H1 (cell line): ENCODE measurements at regions of chr9 and their contacts with region 1.

Region 1: GRCh38 chr9:18442629-18443491 is 31.1 kb upstream of the ADAMTSL1 start:
- DNase-seq: peak; percentile 47 to 70
- H3K4me3 ChIP-seq: no peak overlapping the region
- H3K27ac ChIP-seq: no peak overlapping the region
- H3K4me1 ChIP-seq: peaks cover 0 to 7% (median 3%) of the 10 kb centered on the region in 4 experiments; a peak in 5 of 7 replicates
- H3K27me3 ChIP-seq: peaks cover 0 to 2% (median 0%) of the 10 kb centered on the region in 4 experiments; a peak in 1 of 7 replicates
- CTCF ChIP-seq: peak; percentile 89 to 97 (median 90)
- EP300 ChIP-seq: no peak
- POLR2A ChIP-seq: no peak
- RAD21 ChIP-seq: peak; percentile 77

Region 2: GRCh38 chr9:18255158-18255629 is 187.7 kb before region 1 on chr9:
- CTCF ChIA-PET with region 1: interaction called, 39 read pairs
- POLR2A ChIA-PET with region 1: interaction called, 4 read pairs
- DNase-seq: peak; percentile 31 to 87
- H3K4me3 ChIP-seq: no peak overlapping the region
- H3K27ac ChIP-seq: no peak overlapping the region
- H3K4me1 ChIP-seq: no peaks in the 10 kb centered on the region
- H3K27me3 ChIP-seq: no peaks in the 10 kb centered on the region
- CTCF ChIP-seq: peak; percentile 68 to 90 (median 78)
- EP300 ChIP-seq: no peak
- POLR2A ChIP-seq: no peak
- RAD21 ChIP-seq: peak; percentile 90 to 96

Region 3: GRCh38 chr9:18260521-18260920 is 182.3 kb before region 1 on chr9:
- CTCF ChIA-PET with region 1: interaction called, 39 read pairs
- POLR2A ChIA-PET with region 1: interaction called, 4 read pairs
- DNase-seq: no peak
- H3K4me3 ChIP-seq: no peak overlapping the region
- H3K27ac ChIP-seq: no peak overlapping the region
- H3K4me1 ChIP-seq: no peaks in the 10 kb centered on the region
- H3K27me3 ChIP-seq: no peaks in the 10 kb centered on the region
- CTCF ChIP-seq: no peak
- EP300 ChIP-seq: no peak
- POLR2A ChIP-seq: no peak
- RAD21 ChIP-seq: no peak

Region 4: DNA sequence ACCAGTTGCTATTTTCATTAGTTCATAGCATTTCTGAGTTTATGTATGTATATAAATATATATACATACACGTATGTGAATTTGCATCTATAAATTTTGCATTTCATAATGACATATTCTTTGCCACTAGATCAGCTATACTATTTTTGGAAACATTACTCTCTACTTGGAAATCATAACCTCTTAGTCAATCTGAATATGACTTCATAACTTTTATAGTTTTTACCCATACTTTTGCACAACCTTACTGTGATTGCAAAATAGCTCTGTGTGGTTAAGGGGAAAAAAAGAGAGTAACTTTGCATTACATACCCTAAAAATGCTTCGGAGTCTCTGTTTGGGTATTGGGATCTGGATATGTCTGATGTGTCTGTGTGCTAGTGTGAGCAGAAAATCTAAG is 13.8 kb before region 1 on chr9:
- CTCF ChIA-PET with region 1: interaction called, 23 read pairs
- POLR2A ChIA-PET with region 1: no interaction called
- DNase-seq: no peak
- H3K4me3 ChIP-seq: no peak overlapping the region
- H3K27ac ChIP-seq: no peak overlapping the region
- H3K4me1 ChIP-seq: no peaks in the 10 kb centered on the region
- H3K27me3 ChIP-seq: no peaks in the 10 kb centered on the region
- CTCF ChIP-seq: no peak
- EP300 ChIP-seq: no peak
- POLR2A ChIP-seq: no peak
- RAD21 ChIP-seq: no peak

Region 5: GRCh38 chr9:18459958-18460584 is 17.2 kb after region 1 on chr9:
- CTCF ChIA-PET with region 1: interaction called, 26 read pairs
- POLR2A ChIA-PET with region 1: no interaction called
- DNase-seq: no peak
- H3K4me3 ChIP-seq: no peak overlapping the region
- H3K27ac ChIP-seq: no peak overlapping the region
- H3K4me1 ChIP-seq: no peaks in the 10 kb centered on the region
- H3K27me3 ChIP-seq: no peaks in the 10 kb centered on the region
- CTCF ChIP-seq: no peak
- EP300 ChIP-seq: no peak
- POLR2A ChIP-seq: no peak
- RAD21 ChIP-seq: no peak

Region 6: GRCh38 chr9:18555105-18555883 is 112.4 kb after region 1 on chr9:
- CTCF ChIA-PET with region 1: no interaction called
- POLR2A ChIA-PET with region 1: no interaction called
- DNase-seq: no peak
- H3K4me3 ChIP-seq: no peak overlapping the region
- H3K27ac ChIP-seq: no peak overlapping the region
- H3K4me1 ChIP-seq: no peaks in the 10 kb centered on the region
- H3K27me3 ChIP-seq: no peaks in the 10 kb centered on the region
- CTCF ChIP-seq: no peak
- EP300 ChIP-seq: no peak
- POLR2A ChIP-seq: no peak
- RAD21 ChIP-seq: no peak